Activated naive CD4-positive, alpha-beta T cell treated with anti-CD3 and anti-CD28 coated beads for 36 hours (primary cell): ENCODE measurements at regions of chr2 and their contacts with region 1.

Region 1: DNA sequence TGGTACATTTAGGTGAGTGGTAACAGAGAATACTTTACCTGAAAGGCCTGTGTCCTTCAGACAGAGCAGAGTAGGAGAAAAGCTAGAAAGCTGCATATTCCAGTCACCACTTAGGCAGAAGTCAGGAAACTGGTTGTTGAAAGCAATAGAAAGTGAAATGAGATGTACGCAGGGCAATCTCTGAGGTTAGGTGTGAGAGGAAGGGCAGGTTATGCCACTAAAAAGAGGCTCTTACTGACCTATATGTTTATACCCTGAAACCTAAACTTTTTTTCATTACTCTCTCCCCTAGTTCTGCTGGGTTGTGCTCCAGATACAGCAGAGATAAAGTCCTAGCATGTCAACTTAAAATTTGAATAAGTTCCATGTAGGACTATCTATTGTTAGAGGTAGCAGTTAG is 93.5 kb downstream of the COX7A2L start:
- DNase-seq: no peak
- H3K4me3 Mint-ChIP-seq: no peak overlapping the region
- H3K27ac Mint-ChIP-seq: peak overlapping the region; percentile 17
- H3K4me1 Mint-ChIP-seq: peaks cover 21% of the 10 kb centered on the region
- H3K27me3 Mint-ChIP-seq: no peaks in the 10 kb centered on the region

Region 2: DNA sequence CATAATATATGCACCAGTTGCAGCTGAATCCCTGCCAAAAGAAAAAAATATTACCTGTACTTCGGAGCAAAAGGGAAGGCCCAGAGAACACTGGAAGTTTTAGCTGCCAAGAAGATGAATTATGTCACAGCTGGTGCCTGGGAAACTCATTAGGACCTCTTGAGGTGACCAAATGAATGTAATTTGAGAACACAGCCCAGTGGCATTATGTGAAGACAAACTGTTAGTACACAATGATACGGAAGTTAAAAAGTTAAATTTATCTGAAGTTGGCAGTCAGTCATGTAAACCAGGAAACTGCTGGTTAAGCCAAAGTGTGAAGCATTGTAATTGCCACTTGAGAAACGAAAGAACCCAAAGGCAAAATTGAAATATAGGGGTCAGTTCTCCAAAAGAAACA is 17.6 kb before region 1 on chr2:
- CTCF ChIA-PET with region 1: interaction called, 3 read pairs
- intact Hi-C with region 1: loop called (anchors 2 kb)
- DNase-seq: no peak
- H3K4me3 Mint-ChIP-seq: no peak overlapping the region
- H3K27ac Mint-ChIP-seq: no peak overlapping the region
- H3K4me1 Mint-ChIP-seq: peaks cover 50% of the 10 kb centered on the region
- H3K27me3 Mint-ChIP-seq: no peaks in the 10 kb centered on the region